Endothelial cell of umbilical vein (primary cell): ENCODE measurements at regions of chr1 and their contacts with region 1.

Region 1: GRCh38 chr1:43067977-43068751 is 103.9 kb downstream of the EBNA1BP2 start:
- DNase-seq: no peak
- H3K4me3 ChIP-seq: peak overlapping the region in 1 of 3 experiments; percentile 39
- H3K27ac ChIP-seq: no peak overlapping the region
- H3K4me1 ChIP-seq: no peaks in the 10 kb centered on the region
- H3K27me3 ChIP-seq: no peaks in the 10 kb centered on the region
- CTCF ChIP-seq: no peak
- POLR2A ChIP-seq: no peak

Region 2: DNA sequence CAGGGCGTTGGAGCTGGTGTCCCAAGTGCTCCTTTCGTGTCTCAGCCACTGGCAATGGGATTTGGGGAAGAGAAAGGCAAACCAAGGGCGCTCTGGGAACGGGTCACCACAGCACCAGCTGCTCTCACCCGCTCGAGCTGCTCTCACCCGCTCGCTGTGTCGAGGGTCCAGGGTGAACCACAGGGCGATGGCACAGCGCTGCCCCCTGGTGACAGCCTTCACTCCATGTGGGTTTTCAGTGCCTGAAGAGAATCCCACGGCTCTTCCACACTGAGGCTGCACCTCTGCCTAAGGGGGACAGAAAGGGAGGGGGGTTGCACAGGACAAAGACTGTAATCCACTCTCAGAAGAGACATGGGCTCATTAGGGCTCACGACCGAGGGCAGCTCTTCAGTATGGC is 321.0 kb before region 1 on chr1:
- CTCF ChIA-PET with region 1: no interaction called
- POLR2A ChIA-PET with region 1: no interaction called
- dilution Hi-C with region 1: no loop called
- intact Hi-C with region 1: no loop called
- DNase-seq: peak; percentile 22
- H3K4me3 ChIP-seq: no peak overlapping the region
- H3K27ac ChIP-seq: no peak overlapping the region
- H3K4me1 ChIP-seq: no peaks in the 10 kb centered on the region
- H3K27me3 ChIP-seq: no peaks in the 10 kb centered on the region
- CTCF ChIP-seq: peak; percentile 52 to 78
- POLR2A ChIP-seq: no peak

Region 3: DNA sequence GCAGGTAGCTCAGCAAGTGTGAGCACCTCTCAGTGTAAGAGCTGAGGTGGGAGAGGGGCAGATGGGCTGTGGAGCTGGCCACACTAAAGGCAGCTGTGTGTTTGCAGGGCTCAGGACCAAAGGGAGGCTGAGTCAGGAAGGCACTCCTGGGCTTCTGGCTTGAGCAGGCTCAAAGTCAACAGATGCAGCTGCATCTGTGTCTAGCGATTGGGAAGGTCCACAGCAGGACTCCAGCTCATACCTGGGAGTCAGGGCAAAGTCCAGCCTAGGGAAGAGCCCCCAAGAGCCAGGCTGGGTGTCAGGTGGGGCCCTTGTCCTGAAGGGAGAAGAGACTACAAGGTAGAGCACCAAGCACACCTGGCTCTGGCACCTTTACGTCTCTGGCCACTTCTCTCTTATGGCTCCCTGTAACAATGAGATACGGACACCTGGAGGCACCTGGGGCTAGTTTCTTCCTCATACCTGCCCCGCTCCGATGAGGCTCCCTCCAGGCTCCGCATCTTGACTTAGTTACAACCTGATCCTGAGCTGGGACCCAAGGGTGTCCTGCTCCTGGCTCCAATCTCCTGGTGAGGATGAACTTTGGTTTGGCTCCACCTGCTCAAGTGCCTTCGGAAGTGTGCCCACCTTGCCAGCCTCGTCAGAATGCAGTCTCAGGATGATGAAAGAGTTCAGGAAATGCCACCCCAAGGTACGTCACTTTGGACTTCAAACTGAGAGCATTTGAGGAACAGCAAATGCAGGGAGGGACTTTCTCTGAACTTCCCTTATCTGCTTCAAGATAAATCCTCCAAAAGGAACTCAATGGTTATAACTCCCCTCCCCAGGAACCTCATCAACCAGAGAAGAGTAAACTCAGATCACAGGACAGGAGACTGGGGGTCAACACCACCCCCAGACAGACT is 88.0 kb before region 1 on chr1:
- CTCF ChIA-PET with region 1: interaction called, 18 read pairs
- POLR2A ChIA-PET with region 1: no interaction called
- dilution Hi-C with region 1: no loop called
- intact Hi-C with region 1: loop called (anchors 5 kb)
- DNase-seq: no peak
- H3K4me3 ChIP-seq: no peak overlapping the region
- H3K27ac ChIP-seq: no peak overlapping the region
- H3K4me1 ChIP-seq: peaks cover 12% of the 10 kb centered on the region
- H3K27me3 ChIP-seq: no peaks in the 10 kb centered on the region
- CTCF ChIP-seq: no peak
- POLR2A ChIP-seq: no peak

Region 4: GRCh38 chr1:44213222-44214112 is 1145.3 kb after region 1 on chr1 and contains the start of gene DMAP1:
- CTCF ChIA-PET with region 1: no interaction called
- POLR2A ChIA-PET with region 1: no interaction called
- dilution Hi-C with region 1: no loop called
- intact Hi-C with region 1: no loop called
- DNase-seq: peak; percentile 81
- H3K4me3 ChIP-seq: peak within 1 kb of the TSS; percentile 64 to 82 (median 76)
- H3K27ac ChIP-seq: no peak within 1 kb of the TSS
- H3K4me1 ChIP-seq: peaks cover 13% of the 10 kb centered on the region
- H3K27me3 ChIP-seq: no peaks in the 10 kb centered on the region
- CTCF ChIP-seq: no peak
- POLR2A ChIP-seq: peak; percentile 69
- total RNA-seq, gene DMAP1: 40.9 and 42.9 TPM in 2 replicates